ENCODE measurements at regions of chrX and their contacts with region 1.

Region 1: GRCh38 chrX:103310542-103311398 is at the start of gene BEX2:
- DNase-seq: peak; percentile 66
- ATAC-seq: peak; percentile 98
- H3K4me3 Mint-ChIP-seq: peak within 1 kb of the TSS; percentile 82
- H3K27ac Mint-ChIP-seq: peak within 1 kb of the TSS; percentile 35
- H3K4me1 Mint-ChIP-seq: no peaks in the 10 kb centered on the region
- H3K27me3 Mint-ChIP-seq: no peaks in the 10 kb centered on the region
- CTCF ChIP-seq: no peak
- total RNA-seq, gene BEX2: 12.3 and 13.1 TPM in 2 replicates

Region 2: GRCh38 chrX:103254921-103255493 is 55.8 kb before region 1 on chrX and contains the start of gene TCEAL8:
- CTCF ChIA-PET with region 1: no interaction called
- POLR2A ChIA-PET with region 1: no interaction called
- intact Hi-C with region 1: loop called (anchors 5 kb)
- DNase-seq: peak; percentile 27
- ATAC-seq: peak; percentile 91
- H3K4me3 Mint-ChIP-seq: peak within 1 kb of the TSS; percentile 95
- H3K27ac Mint-ChIP-seq: peak within 1 kb of the TSS; percentile 84
- H3K4me1 Mint-ChIP-seq: peaks cover 12% of the 10 kb centered on the region
- H3K27me3 Mint-ChIP-seq: no peaks in the 10 kb centered on the region
- CTCF ChIP-seq: no peak
- total RNA-seq, gene TCEAL8: 14.6 and 16.3 TPM in 2 replicates

Region 3: DNA sequence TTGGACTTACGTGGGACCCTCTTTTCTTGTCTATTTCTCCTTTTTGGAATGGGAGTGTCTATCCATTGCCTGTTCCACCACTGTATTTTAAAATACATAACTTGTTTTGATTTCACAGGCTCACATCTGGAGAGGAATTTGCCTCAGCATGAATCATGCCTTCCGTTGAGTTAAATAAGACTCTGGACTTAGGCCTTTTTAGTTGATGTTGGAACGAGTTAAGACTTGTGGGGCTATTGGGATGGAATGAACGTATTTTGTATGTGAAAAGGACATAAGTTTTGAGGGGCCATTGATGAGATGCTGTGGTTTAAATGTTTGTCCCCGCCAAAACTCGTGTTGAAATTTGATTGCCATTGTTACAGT is 131.7 kb after region 1 on chrX:
- CTCF ChIA-PET with region 1: no interaction called
- POLR2A ChIA-PET with region 1: no interaction called
- intact Hi-C with region 1: no loop called
- DNase-seq: no peak
- ATAC-seq: no peak
- H3K4me3 Mint-ChIP-seq: no peak overlapping the region
- H3K27ac Mint-ChIP-seq: no peak overlapping the region
- H3K4me1 Mint-ChIP-seq: no peaks in the 10 kb centered on the region
- H3K27me3 Mint-ChIP-seq: no peaks in the 10 kb centered on the region
- CTCF ChIP-seq: no peak

Measured in activated B cell treated with CpG ODN at 0.5 μM for 24 hours (primary cell).